AG04450 (cell line): ENCODE measurements at regions of chr11 and their contacts with region 1.

Region 1: DNA sequence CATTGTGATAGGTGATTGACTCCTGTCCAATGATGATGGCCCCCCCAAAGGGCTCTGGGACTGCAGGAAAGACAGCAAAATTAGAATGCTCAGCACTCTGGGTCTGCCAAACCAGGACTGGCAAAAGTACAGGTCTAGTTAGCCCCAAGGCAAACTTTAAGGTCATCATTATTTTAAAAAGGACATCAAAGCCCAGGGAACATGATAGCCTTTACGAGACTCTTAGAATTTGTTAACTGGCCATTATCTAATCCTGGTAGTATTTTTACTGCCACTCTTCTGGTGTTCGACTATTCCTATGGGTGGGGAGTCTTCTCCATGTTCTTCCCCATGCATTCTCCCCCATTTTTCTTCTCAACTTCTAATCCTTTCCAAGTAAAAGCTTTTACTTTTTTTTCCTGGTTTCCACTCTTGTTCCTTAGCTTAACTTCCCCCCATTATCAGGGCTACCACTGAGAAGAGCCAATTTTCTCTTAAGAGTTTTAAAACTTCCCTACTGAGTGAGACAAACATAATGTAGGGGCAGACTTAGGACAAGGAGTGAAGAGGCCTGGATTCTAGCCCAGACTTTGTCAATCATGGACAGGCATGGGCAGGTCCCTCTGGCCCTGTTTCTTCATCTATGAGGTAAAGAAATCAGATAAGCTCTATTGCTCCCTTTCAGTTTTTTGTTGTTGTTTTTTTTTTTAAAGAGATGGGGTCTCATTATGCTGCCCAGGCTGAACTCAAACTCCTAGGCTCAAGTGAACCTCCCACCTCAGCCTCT is 7.1 kb downstream of the DDB1 start:
- DNase-seq: no peak
- H3K4me3 ChIP-seq: no peak overlapping the region
- H3K27ac ChIP-seq: peak overlapping the region; percentile 21
- H3K27me3 ChIP-seq: no peaks in the 10 kb centered on the region
- CTCF ChIP-seq: no peak

Region 2: GRCh38 chr11:61309739-61310138 is 16.1 kb before region 1 on chr11:
- CTCF ChIA-PET with region 1: interaction called, 4 read pairs
- POLR2A ChIA-PET with region 1: interaction called, 10 read pairs
- DNase-seq: no peak
- H3K4me3 ChIP-seq: no peak overlapping the region
- H3K27ac ChIP-seq: no peak overlapping the region
- H3K27me3 ChIP-seq: no peaks in the 10 kb centered on the region
- CTCF ChIP-seq: no peak